ENCODE measurements at regions of chrX and their contacts with region 1.

Region 1: GRCh38 chrX:14029425-14030173 is at the start of gene GEMIN8:
- DNase-seq: peak; percentile 81
- H3K4me3 Mint-ChIP-seq: peak within 1 kb of the TSS; percentile 99
- H3K27ac Mint-ChIP-seq: peak within 1 kb of the TSS; percentile 100
- H3K4me1 Mint-ChIP-seq: peaks cover 37% of the 10 kb centered on the region
- H3K27me3 Mint-ChIP-seq: no peaks in the 10 kb centered on the region
- total RNA-seq, gene GEMIN8: 15.6 and 17.7 TPM in 2 replicates

Region 2: DNA sequence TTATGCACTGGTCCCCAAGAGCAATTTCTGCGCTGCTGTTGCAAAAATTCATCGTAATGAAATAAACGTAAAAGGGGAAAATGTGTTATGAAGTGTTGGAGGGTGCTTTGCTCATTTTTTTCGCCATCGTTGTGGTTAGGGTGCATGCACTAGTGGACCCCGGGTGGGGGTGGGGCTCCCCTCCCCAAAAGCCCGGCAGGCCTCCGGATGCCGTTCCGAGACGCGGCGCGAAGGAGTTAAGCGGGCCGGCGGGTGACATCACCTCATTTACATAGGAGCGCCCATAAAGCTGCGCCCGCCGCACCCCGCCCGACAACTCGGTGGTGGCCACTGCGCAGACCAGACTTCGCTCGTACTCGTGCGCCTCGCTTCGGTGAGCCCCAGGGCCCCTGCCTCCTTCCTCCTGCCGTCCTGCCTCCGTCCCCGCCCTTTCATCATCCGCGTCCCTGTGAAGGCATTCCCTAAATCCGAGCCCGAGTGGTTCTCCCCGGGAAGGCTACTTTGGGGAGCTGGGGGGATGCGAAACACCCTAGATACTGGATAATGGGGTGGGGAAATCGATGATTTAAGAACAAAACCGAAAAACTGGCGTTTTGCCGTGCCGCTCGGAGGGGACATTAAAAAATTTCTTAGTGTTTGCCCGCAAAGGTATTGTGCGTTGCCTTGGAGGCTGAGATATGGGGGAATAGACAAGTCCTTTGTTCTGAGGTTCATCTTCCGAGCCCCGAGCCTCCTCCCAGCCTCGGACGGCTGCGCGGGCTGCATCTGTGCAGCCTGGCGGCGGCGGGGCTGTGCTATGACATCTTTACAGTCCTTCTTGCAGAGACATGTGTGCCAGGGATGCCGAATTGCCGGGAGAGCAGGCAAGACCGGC is 1054.6 kb before region 1 on chrX and contains the start of gene TMSB4X:
- intact Hi-C with region 1: loop called (anchors 10 kb)
- DNase-seq: peak; percentile 83
- H3K4me3 Mint-ChIP-seq: peak within 1 kb of the TSS; percentile 97
- H3K27ac Mint-ChIP-seq: peak within 1 kb of the TSS; percentile 98
- H3K4me1 Mint-ChIP-seq: peaks cover 50% of the 10 kb centered on the region
- H3K27me3 Mint-ChIP-seq: no peaks in the 10 kb centered on the region
- total RNA-seq, gene TMSB4X: 6,544 and 6,612 TPM in 2 replicates

Region 3: GRCh38 chrX:13569479-13570260 is 459.9 kb before region 1 on chrX and contains the start of gene EGFL6:
- intact Hi-C with region 1: loop called (anchors 1 kb)
- DNase-seq: no peak
- H3K4me3 Mint-ChIP-seq: peak within 1 kb of the TSS; percentile 75
- H3K27ac Mint-ChIP-seq: no peak within 1 kb of the TSS
- H3K4me1 Mint-ChIP-seq: peaks cover 23% of the 10 kb centered on the region
- H3K27me3 Mint-ChIP-seq: peaks cover 6% of the 10 kb centered on the region
- total RNA-seq, gene EGFL6: 2.0 and 2.5 TPM in 2 replicates

Region 4: GRCh38 chrX:13688958-13689740 is 340.4 kb before region 1 on chrX and contains the start of gene RAB9A:
- intact Hi-C with region 1: loop called (anchors 1 kb)
- DNase-seq: peak; percentile 76
- H3K4me3 Mint-ChIP-seq: peak within 1 kb of the TSS; percentile 89
- H3K27ac Mint-ChIP-seq: peak within 1 kb of the TSS; percentile 95
- H3K4me1 Mint-ChIP-seq: peaks cover 51% of the 10 kb centered on the region
- H3K27me3 Mint-ChIP-seq: no peaks in the 10 kb centered on the region
- total RNA-seq, gene RAB9A: 9.4 and 11.8 TPM in 2 replicates

Region 5: GRCh38 chrX:13898083-13898482 is 131.5 kb before region 1 on chrX:
- intact Hi-C with region 1: loop called (anchors 1 kb)
- DNase-seq: no peak
- H3K4me3 Mint-ChIP-seq: no peak overlapping the region
- H3K27ac Mint-ChIP-seq: no peak overlapping the region
- H3K4me1 Mint-ChIP-seq: no peaks in the 10 kb centered on the region
- H3K27me3 Mint-ChIP-seq: peaks cover 2% of the 10 kb centered on the region

Region 6: DNA sequence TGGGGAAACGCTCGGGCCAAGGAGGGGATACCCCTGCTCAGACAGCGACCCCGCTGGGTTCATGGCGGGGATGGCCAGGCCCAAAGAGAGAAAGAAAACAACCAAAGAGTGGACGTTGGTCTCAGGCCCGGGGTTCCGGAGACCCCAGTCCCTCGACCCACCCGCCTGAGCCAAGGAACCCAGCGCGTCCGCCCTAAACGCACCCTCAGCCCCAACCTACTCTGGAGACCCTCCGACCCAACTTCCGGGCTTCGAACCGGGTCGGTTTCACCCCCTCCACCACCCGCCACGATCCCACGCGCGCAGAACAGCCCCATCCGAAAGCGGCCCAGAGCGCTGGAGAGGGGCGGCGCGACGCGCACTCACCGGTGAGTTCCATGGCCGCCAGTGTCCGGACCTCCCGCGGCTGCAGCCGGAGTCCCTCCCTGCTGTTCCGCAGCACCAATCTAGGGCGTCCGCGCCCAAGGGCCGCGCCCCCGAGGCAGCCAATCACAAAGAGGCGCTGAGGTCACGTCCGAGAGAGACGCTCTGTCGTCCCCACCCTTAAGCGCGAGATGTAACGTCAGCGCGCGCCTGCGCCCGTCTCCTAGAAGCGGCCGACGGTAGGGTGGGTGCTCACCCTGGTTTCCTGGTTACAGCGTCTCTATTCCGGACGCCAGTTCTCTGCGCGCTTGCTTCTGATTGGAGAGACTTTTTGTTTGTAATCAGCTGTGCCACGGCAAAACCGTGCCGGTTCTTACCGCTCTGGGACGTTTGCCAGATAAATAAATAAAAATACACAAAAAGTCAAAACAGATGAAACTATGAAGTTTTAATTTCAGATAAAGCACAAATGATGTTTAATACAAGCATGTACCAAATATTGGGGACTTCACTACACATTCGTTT is 1305.8 kb after region 1 on chrX and contains the start of gene PIGA:
- intact Hi-C with region 1: loop called (anchors 5 kb)
- DNase-seq: peak; percentile 89
- H3K4me3 Mint-ChIP-seq: peak within 1 kb of the TSS; percentile 91
- H3K27ac Mint-ChIP-seq: peak within 1 kb of the TSS; percentile 88
- H3K4me1 Mint-ChIP-seq: peaks cover 14% of the 10 kb centered on the region
- H3K27me3 Mint-ChIP-seq: no peaks in the 10 kb centered on the region
- total RNA-seq, gene PIGA: 23.9 and 25.4 TPM in 2 replicates

Measured in activated T-helper 1 cell treated with anti-CD3 and anti-CD28 coated beads, Interleukin-12 subunit alpha, Interleukin-12 subunit beta, Interleukin-2, Interleukin-4 antibody, amounts not matched to agents 30 ng/mL and 10 ng/mL and 1 ng/mL, durations not matched to agents 14 hours and 24 hours and 36 hours (primary cell).